ENCODE measurements at regions of chr6 and their contacts with region 1.

Region 1: DNA sequence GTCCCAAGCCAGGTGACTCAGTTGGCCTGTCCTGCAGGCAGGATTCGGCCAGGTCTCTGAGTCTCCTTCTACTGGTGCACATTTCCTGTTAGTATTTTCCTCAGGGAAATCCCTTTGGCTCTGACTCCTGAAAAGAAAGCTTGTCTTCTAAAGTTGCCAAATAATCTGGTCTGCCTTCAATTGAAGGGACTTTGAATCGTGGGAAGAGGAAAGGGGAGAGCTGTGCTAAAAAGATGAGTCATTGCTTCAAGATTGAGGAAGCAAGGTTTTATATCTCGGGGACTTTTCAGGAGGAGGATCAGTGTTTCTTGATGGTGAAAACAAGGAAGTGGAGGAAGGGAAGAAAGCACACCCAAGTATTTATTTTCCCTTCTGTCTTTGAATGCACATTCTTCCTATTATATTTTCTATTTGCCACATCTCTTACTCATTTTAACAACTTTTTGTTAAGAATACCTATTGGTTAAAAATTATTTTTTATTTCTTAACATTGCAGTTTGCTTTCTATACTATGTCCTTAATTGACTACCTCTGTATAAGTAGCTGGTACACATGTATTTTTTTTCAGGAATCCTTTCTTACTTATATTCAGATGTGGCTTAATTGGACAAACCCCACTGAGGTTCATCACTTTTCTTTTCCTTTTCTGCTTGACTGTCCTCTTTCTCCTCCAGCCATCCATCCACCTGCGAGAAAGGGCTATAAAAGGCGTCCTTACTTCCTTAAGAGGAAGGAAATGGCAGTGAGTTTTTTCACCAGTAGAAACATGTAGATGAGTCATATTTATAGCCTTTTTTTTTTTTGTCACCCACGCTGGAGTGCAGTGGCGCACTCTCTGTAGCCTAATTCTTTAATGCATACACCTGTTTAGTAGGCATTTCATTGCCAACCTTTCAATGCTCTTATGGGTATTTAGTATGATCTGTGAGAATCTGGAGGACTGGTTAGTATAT is 15.0 kb upstream of the IFNGR1 start:
- DNase-seq: peak; percentile 80
- H3K4me3 ChIP-seq: peak overlapping the region; percentile 51
- H3K27ac ChIP-seq: peak overlapping the region; percentile 58
- H3K4me1 ChIP-seq: peaks cover 57% of the 10 kb centered on the region
- CTCF ChIP-seq: no peak

Region 2: DNA sequence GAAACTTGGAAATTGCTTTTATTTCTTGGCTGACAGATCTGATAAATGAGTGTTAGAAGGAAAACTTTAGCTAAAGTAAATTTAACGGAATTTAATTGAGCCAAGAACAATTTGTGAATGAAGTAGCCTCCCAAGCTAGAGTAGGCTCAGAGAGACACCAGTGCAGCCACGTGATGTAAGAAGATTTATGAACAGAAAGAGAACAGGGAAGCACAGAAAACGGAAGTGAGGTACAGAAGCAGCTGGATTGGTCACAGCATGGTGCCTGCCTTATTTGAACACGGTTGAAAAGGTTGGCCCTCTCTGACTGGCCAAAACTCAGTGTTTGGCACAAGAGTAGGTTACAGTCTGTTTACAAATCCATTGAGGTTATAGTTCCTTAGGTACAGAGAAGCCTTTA is 14.5 kb after region 1 on chr6:
- CTCF ChIA-PET with region 1: no interaction called
- POLR2A ChIA-PET with region 1: interaction called, 13 read pairs
- intact Hi-C with region 1: no loop called
- DNase-seq: peak; percentile 57
- H3K4me3 ChIP-seq: no peak overlapping the region
- H3K27ac ChIP-seq: no peak overlapping the region
- H3K4me1 ChIP-seq: peaks cover 8% of the 10 kb centered on the region
- CTCF ChIP-seq: no peak

Region 3: DNA sequence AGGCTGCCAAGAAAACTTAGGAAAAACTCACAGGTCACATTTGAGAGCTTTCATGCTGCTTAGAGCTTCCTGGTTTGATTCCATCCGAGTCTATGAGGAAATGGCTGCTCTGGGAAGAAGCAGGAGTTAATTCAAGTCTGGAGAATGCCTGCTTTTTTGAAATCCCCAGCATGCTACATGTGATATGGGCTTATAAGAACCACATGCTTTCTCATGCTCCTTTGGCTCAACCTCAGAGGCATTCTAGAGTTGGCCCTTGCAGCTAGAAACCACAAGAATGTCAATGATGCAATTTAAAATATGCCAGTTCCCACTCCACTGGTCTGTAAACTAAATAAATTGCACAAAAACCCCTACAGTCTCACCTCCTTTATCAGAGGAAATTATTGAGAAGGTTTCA is 402.9 kb after region 1 on chr6:
- CTCF ChIA-PET with region 1: no interaction called
- POLR2A ChIA-PET with region 1: no interaction called
- intact Hi-C with region 1: no loop called
- DNase-seq: no peak
- H3K4me3 ChIP-seq: no peak overlapping the region
- H3K27ac ChIP-seq: no peak overlapping the region
- H3K4me1 ChIP-seq: peaks cover 22% of the 10 kb centered on the region
- CTCF ChIP-seq: no peak

Region 4: GRCh38 chr6:138773177-138774091 is 1539.2 kb after region 1 on chr6 and contains the start of gene CCDC28A:
- CTCF ChIA-PET with region 1: no interaction called
- POLR2A ChIA-PET with region 1: no interaction called
- intact Hi-C with region 1: loop called (anchors 10 kb)
- DNase-seq: peak; percentile 98
- H3K4me3 ChIP-seq: peak within 1 kb of the TSS; percentile 99
- H3K27ac ChIP-seq: peak within 1 kb of the TSS; percentile 83
- H3K4me1 ChIP-seq: peaks cover 20% of the 10 kb centered on the region
- CTCF ChIP-seq: no peak
- total RNA-seq, gene CCDC28A: 11.0 and 13.5 TPM in 2 replicates